A549 (cell line): ENCODE measurements at regions of chr12 and their contacts with region 1.

Region 1: DNA sequence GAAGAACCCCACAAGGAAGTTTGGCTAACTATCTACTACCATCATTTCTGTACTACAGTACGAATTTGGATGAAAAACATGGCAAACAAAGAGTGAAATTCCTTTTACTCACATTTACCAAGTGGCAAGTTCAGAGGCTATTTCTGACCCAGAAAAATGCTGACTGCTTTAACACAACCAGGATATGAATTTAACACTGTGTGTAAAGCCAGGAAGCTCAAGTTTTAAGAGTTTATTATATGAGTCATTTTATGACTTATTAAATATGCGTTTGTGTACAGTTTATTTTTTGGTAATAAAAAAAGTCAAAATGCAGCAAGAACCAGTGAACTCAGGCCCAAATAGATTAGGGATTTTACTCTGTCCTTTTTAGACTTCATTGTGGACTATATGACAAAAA is 58.4 kb upstream of the STAC3 start:
- DNase-seq: peak in 1 of 2 experiments; percentile 43
- ATAC-seq: peak; percentile 26 to 61; a peak in 4 of 6 replicates
- H3K4me3 ChIP-seq: no peak overlapping the region
- H3K27ac ChIP-seq: peak overlapping the region; percentile 58 to 76
- H3K4me1 ChIP-seq: peaks cover 30% of the 10 kb centered on the region
- CTCF ChIP-seq: no peak
- EP300 ChIP-seq: no peak
- POLR2A ChIP-seq: no peak
- RAD21 ChIP-seq: no peak

Region 2: DNA sequence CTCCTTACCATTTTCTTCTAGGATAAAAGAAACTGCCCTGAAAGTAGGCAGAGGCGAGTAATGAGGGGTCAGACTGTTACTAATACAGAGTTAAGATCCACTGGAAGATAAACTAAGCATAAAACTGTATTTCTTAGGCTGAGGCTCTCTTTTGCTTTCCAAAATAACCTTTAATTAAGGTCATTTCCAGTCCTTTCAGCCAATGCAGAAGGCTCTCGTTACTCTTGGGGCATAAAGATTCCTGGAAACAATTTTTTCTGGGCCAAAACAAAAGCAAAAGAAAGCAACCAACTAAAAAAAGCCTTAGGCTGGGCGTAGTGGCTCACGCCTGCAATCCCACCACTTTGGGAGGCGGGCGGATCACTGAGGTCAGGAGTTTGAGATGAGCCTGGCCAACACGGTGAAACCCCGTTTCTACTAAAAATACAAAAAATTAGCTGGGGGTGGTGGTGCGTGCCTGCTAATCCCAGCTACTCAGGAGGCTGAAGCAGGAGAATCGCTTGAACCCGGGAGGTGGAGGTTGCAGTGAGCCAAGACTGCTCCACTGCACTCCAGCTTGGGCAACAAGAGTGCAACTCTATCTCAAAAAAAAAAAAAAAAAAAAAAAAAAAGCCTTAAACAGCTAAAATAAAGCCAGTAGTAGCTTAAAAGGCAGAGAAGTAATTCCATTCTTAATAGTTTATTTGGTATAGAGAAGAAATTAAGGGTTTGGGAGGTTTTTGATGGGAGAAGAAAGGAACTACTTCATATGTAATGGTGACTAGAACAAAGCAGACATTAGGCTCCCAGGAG is 10.5 kb after region 1 on chr12:
- CTCF ChIA-PET with region 1: interaction called, 37 read pairs
- POLR2A ChIA-PET with region 1: interaction called, 4 read pairs
- DNase-seq: no peak
- ATAC-seq: 0 out of 6 replicates have a peak, but pooled peaks of 1 of the 2 experiments have one; percentile 25
- H3K4me3 ChIP-seq: no peak overlapping the region
- H3K27ac ChIP-seq: 0 out of 6 replicates have a peak overlapping the region, but pooled peaks of 1 of the 2 experiments have one; percentile 5
- H3K4me1 ChIP-seq: peaks cover 10% of the 10 kb centered on the region
- CTCF ChIP-seq: no peak
- EP300 ChIP-seq: no peak
- POLR2A ChIP-seq: no peak
- RAD21 ChIP-seq: no peak

Region 3: DNA sequence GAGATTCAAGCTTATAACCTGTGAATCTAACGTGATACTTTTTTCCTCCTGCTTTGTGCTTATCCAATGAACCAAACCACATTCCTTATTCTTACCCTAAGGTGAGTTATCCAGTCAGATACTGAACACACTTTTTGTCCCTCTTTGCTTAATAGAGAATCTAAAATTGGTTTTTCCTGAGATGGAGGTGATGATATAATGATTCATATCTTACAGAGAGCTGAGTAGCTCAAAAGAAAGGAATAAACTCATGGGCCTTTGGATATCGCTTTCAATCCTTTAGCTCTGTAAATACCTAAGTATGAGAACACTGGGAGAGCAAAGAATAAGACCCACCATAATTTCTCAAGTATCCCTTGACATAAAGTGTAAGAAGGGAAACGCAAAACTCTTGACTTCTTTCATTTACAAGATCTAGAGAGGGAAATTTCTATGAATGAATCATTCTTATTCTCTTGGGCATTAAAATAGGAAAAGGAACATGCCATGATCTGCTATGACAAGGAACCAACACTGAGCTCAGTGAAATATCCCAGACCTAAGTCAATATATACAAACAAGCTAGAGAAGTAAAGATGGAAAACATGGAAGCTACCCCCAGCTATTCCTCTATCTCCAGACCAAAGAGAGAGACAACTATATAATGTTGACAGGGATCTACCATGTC is 23.4 kb after region 1 on chr12:
- CTCF ChIA-PET with region 1: interaction called, 12 read pairs
- POLR2A ChIA-PET with region 1: no interaction called
- DNase-seq: no peak
- ATAC-seq: peak in 1 of 2 experiments; percentile 21; a peak in 1 of 6 replicates
- H3K4me3 ChIP-seq: no peak overlapping the region
- H3K27ac ChIP-seq: no peak overlapping the region
- H3K4me1 ChIP-seq: peaks cover 5% of the 10 kb centered on the region; the same call in 2 of the 3 replicates
- CTCF ChIP-seq: no peak
- EP300 ChIP-seq: no peak
- POLR2A ChIP-seq: no peak
- RAD21 ChIP-seq: no peak

Region 4: DNA sequence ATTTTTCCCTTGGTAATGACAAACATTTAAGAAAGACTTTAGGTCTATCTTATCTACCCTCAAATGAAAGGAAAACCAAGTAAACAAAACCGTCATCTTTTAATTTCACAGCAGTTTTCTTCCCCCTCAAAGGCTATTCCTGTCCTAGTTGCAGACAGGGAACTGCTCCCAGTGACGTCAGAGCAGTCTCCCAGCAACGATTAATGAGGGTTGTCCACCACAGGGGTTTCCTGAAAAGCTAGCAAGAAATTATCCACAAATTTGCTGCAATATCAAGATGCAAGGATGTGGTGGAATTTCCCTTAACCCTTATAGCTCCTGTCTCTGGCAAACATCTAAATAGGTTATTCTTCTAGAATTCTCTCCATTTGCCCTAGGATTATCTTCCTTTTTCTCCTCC is 30.7 kb after region 1 on chr12:
- CTCF ChIA-PET with region 1: interaction called, 15 read pairs
- POLR2A ChIA-PET with region 1: no interaction called
- DNase-seq: peak; percentile 41 to 71
- ATAC-seq: peak in 1 of 2 experiments; percentile 65; a peak in 4 of 6 replicates
- H3K4me3 ChIP-seq: no peak overlapping the region
- H3K27ac ChIP-seq: peak overlapping the region in 1 of 2 experiments; percentile 15; a peak in 1 of 6 replicates
- H3K4me1 ChIP-seq: peaks cover 34% of the 10 kb centered on the region
- CTCF ChIP-seq: no peak
- EP300 ChIP-seq: no peak
- POLR2A ChIP-seq: no peak
- RAD21 ChIP-seq: no peak

Region 5: GRCh38 chr12:57368349-57369095 is 59.1 kb after region 1 on chr12:
- CTCF ChIA-PET with region 1: interaction called, 20 read pairs
- POLR2A ChIA-PET with region 1: interaction called, 7 read pairs
- DNase-seq: peak; percentile 70 to 97
- ATAC-seq: peak; percentile 92 to 95
- H3K4me3 ChIP-seq: peak overlapping the region; percentile 20; the same call in 2 of the 3 replicates
- H3K27ac ChIP-seq: peak overlapping the region; percentile 79 to 89
- H3K4me1 ChIP-seq: peaks cover 61% of the 10 kb centered on the region
- CTCF ChIP-seq: no peak
- EP300 ChIP-seq: peak; percentile 39 to 77; a peak in 2 of 5 replicates
- POLR2A ChIP-seq: no peak
- RAD21 ChIP-seq: peak in 1 of 2 experiments; percentile 46; a peak in 4 of 5 replicates

Region 6: GRCh38 chr12:57389033-57389432 is 79.6 kb after region 1 on chr12:
- CTCF ChIA-PET with region 1: interaction called, 10 read pairs
- POLR2A ChIA-PET with region 1: no interaction called
- DNase-seq: peak; percentile 76 to 81
- ATAC-seq: peak; percentile 97 to 99
- H3K4me3 ChIP-seq: no peak overlapping the region
- H3K27ac ChIP-seq: peak overlapping the region; percentile 66 to 80
- H3K4me1 ChIP-seq: peaks cover 31% of the 10 kb centered on the region
- CTCF ChIP-seq: no peak
- EP300 ChIP-seq: peak in 1 of 2 experiments; percentile 54; a peak in 1 of 5 replicates
- POLR2A ChIP-seq: no peak
- RAD21 ChIP-seq: 0 out of 5 replicates have a peak, but pooled peaks of 1 of the 2 experiments have one; percentile 25